Psoas muscle (tissue), 8 donors: ENCODE measurements at regions of chr2 and their contacts with region 1.

Region 1: DNA sequence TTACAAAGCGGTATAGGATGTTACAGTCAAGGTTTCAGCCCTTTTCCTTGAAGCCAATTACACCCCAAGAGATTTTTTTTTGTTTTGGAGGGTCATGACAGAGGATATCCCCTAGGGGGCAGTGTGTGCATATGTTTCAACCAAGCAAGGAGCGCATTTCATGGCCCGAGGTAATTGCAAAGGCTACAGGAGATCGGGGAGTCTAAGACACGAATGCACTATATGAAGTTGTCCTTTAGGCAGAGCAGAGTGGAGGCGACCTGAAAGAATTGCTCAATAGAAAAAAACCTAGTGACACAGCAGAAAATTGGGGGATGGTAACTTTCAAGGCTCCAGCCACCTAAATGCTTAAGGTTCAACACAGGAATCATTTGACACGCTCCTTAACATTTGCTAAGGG is 219.8 kb upstream of the PARD3B start:
- DNase-seq: no peak
- ATAC-seq: peak; percentile 72 to 85 (median 80)
- H3K4me3 ChIP-seq: no peak overlapping the region
- H3K27ac ChIP-seq: no peak overlapping the region
- H3K4me1 ChIP-seq: peaks cover 15% of the 10 kb centered on the region
- H3K27me3 ChIP-seq: no peaks in the 10 kb centered on the region
- CTCF ChIP-seq: peak; percentile 89

Region 2: DNA sequence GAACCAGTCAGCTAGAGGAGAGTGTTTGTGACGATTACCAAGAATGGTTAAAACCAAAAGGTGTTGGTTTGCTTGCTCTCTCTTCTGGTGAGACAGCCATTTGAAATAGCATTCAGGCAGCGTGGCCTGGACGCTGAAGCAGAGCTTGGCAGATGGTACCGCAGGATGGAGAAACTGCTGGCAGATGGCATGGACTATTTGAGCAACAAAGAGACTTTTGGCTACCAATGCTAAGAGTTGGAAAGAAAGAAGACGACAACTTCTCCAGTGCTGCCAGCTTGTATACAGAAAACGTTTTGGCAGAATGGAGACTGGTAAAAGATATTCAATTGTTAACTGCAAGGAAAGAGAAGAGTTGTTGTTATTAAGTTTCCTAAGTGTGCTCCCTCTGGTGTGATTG is 534.8 kb after region 1 on chr2:
- intact Hi-C with region 1: loop called in 1 of 2 experiments (anchors 10 kb)
- DNase-seq: peak; percentile 50 to 79
- ATAC-seq: peak; percentile 88 to 100 (median 96)
- H3K4me3 ChIP-seq: peak overlapping the region; percentile 32
- H3K27ac ChIP-seq: peak overlapping the region; percentile 78
- H3K4me1 ChIP-seq: peaks cover 18% of the 10 kb centered on the region
- H3K27me3 ChIP-seq: no peaks in the 10 kb centered on the region
- CTCF ChIP-seq: peak; percentile 29

Region 3: GRCh38 chr2:205680067-205680466 is 1354.6 kb after region 1 on chr2:
- intact Hi-C with region 1: loop called (anchors 5 to 10 kb)
- DNase-seq: no peak
- ATAC-seq: peak in 2 of 4 donors; percentile 40
- H3K4me3 ChIP-seq: no peak overlapping the region
- H3K27ac ChIP-seq: no peak overlapping the region
- H3K4me1 ChIP-seq: no peaks in the 10 kb centered on the region
- H3K27me3 ChIP-seq: peaks cover 7 to 46% (median 8%) of the 10 kb centered on the region in 3 donors
- CTCF ChIP-seq: peak; percentile 51

Region 4: GRCh38 chr2:205754924-205755321 is 1429.5 kb after region 1 on chr2:
- intact Hi-C with region 1: loop called in 1 of 2 experiments (anchors 5 kb)
- DNase-seq: no peak
- ATAC-seq: no peak
- H3K4me3 ChIP-seq: no peak overlapping the region
- H3K27ac ChIP-seq: no peak overlapping the region
- H3K4me1 ChIP-seq: no peaks in the 10 kb centered on the region
- H3K27me3 ChIP-seq: no peaks in the 10 kb centered on the region
- CTCF ChIP-seq: no peak

Region 5: GRCh38 chr2:205925373-205926337 is 1600.2 kb after region 1 on chr2:
- intact Hi-C with region 1: loop called in 1 of 2 experiments (anchors 10 kb)
- DNase-seq: peak; percentile 75 to 86
- ATAC-seq: peak; percentile 70 to 88 (median 82)
- H3K4me3 ChIP-seq: peak overlapping the region; percentile 51
- H3K27ac ChIP-seq: no peak overlapping the region
- H3K4me1 ChIP-seq: peaks cover 4% of the 10 kb centered on the region
- H3K27me3 ChIP-seq: peaks cover 0 to 31% (median 0%) of the 10 kb centered on the region in 3 donors
- CTCF ChIP-seq: peak; percentile 88